Ovary (tissue), 10 donors: ENCODE measurements at regions of chr1 and their contacts with region 1.

Region 1: DNA sequence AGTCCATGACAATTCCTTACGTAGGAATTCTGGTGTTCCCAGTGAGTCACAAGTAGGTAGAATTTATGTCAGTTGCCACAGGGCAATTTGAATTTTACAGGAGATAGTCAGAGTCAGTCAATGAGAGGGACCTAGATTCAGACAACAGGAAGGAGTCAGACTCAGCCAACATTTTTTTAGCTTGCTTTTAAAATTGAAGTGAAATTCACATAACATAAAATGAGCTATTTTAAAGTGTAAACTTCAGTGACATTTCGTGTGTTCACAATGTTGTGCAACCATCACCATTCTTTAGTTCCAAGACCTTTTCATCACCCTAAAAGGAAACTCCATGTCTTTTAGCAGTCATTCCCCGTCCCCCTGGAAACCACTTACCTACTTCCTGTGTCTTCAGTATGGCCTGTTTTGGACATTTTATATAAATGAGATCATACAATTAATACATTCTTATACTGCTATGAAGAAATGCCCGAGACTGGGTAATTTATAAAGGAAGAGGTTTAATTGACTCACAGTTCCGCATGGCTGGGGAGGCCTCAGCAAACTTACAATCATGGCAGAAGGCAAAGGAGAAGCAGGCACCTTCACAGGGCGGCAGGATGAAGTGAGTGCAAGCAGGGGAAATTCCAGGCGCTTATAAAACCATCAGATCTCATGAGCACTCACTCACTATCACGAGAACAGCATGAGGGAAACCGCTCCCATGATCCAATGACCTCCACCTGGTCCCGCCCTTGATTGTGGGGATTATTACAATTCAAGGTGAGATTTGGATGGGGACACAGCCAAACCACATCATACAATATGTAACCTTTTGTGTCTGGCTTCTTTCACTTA is 14.7 kb downstream of the AJAP1 start:
- DNase-seq: no peak
- H3K4me3 ChIP-seq: no peak overlapping the region
- H3K27ac ChIP-seq: no peak overlapping the region
- H3K4me1 ChIP-seq: no peaks in the 10 kb centered on the region
- H3K27me3 ChIP-seq: no peaks in the 10 kb centered on the region
- CTCF ChIP-seq: no peak
- EP300 ChIP-seq: no peak
- POLR2A ChIP-seq: no peak

Region 2: GRCh38 chr1:5611851-5612250 is 942.8 kb after region 1 on chr1:
- intact Hi-C with region 1: loop called in 1 of 4 experiments (anchors 10 kb)
- DNase-seq: no peak
- H3K4me3 ChIP-seq: no peak overlapping the region
- H3K27ac ChIP-seq: no peak overlapping the region
- H3K4me1 ChIP-seq: no peaks in the 10 kb centered on the region
- H3K27me3 ChIP-seq: no peaks in the 10 kb centered on the region
- CTCF ChIP-seq: no peak
- EP300 ChIP-seq: no peak
- POLR2A ChIP-seq: no peak